Psoas muscle (tissue), 8 donors: ENCODE measurements at regions of chr16 and their contacts with region 1.

Region 1: DNA sequence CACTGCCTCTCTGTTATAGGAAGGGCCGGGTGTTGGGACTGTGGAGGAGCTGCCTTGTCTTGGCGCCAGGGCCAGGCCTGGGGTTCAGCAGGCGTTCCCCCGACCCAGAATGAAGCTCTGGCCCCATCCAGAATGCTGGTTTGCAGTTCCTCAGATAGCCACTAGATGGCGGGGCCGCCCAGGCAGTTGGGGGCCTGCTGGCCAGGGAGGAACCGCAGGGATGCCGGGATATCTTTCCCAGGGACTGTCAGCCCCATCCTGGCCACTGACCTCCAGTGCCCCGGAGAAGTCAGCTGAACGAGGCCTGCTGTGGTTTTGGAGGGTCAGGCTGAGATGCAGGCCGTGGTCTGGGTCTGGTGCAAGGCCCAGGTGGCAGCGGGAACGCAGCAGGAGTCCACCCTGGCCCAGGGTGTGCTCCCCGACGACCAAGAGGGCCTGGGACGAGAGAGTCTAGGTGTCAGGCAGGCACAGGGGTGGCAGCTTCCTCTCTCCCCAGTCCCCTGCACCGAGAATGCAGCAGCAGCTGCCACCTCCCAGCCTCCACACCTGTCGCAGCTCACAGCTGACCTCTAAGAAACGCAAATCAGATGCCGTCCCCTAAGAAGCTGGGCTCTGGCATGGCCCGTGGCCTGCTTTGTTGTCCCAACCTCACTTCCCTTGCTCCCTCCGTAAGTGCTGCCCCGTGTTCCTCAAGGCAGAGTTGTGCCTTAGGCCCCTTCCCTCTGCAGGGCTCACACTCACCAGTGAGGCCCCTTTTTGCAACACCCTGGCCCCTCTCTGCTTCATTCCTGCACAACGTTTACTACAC is 51.2 kb downstream of the RMI2 start:
- DNase-seq: peak; percentile 75 to 85
- ATAC-seq: peak; percentile 84 to 92 (median 88)
- H3K4me3 ChIP-seq: no peak overlapping the region
- H3K27ac ChIP-seq: no peak overlapping the region
- H3K4me1 ChIP-seq: peaks cover 5% of the 10 kb centered on the region
- H3K27me3 ChIP-seq: no peaks in the 10 kb centered on the region
- CTCF ChIP-seq: peak; percentile 98

Region 2: DNA sequence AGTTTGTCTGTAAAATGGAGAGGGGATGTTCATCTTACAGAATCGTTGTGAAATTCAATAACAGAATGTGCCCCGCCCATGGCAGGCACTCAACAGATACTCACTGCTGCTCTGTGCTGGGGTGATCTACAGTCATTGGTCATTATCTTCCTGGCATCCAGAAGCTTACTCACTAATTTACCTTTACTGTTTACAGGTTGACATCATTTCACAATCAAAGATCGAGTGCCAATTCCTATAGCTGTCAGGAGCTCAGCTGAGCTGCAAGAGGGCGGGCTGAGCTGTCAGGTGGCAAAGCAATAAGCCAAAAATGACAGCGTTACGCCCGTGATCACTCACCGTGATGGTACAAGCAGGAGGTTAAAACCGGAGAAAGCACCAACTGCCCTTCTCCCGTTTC is 139.0 kb after region 1 on chr16:
- intact Hi-C with region 1: loop called in 1 of 2 experiments (anchors 5 kb)
- DNase-seq: no peak
- ATAC-seq: no peak
- H3K4me3 ChIP-seq: no peak overlapping the region
- H3K27ac ChIP-seq: no peak overlapping the region
- H3K4me1 ChIP-seq: no peaks in the 10 kb centered on the region
- H3K27me3 ChIP-seq: no peaks in the 10 kb centered on the region
- CTCF ChIP-seq: no peak

Region 3: GRCh38 chr16:11715246-11715947 is 319.0 kb after region 1 on chr16:
- intact Hi-C with region 1: loop called (anchors 5 kb)
- DNase-seq: no peak
- ATAC-seq: no peak
- H3K4me3 ChIP-seq: no peak overlapping the region
- H3K27ac ChIP-seq: peak overlapping the region; percentile 44
- H3K4me1 ChIP-seq: peaks cover 42% of the 10 kb centered on the region
- H3K27me3 ChIP-seq: no peaks in the 10 kb centered on the region
- CTCF ChIP-seq: no peak

Region 4: DNA sequence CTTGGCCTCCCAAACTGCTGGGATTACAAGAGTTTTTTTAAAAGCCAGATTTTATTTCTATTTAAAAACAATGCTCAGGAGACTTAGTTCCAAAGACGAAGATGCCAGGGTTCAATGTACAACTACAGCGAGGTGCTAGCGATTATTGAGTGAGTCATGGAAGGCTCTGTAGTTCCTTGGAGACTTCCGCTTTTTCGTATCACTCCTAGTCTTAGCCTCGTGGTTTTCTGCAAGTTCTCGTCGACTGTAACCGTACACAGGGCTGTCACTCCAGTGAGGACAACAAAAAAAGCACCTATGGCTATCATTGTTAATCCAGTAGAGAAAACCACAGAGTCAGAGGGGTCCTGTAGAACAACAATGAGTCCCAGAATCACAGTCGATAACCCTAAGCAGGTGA is 423.4 kb after region 1 on chr16:
- intact Hi-C with region 1: loop called (anchors 5 kb)
- DNase-seq: no peak
- ATAC-seq: no peak
- H3K4me3 ChIP-seq: no peak overlapping the region
- H3K27ac ChIP-seq: no peak overlapping the region
- H3K4me1 ChIP-seq: peaks cover 7% of the 10 kb centered on the region
- H3K27me3 ChIP-seq: no peaks in the 10 kb centered on the region
- CTCF ChIP-seq: no peak